GM10248 (cell line): ENCODE measurements at regions of chr7 and their contacts with region 1.

Region 1: DNA sequence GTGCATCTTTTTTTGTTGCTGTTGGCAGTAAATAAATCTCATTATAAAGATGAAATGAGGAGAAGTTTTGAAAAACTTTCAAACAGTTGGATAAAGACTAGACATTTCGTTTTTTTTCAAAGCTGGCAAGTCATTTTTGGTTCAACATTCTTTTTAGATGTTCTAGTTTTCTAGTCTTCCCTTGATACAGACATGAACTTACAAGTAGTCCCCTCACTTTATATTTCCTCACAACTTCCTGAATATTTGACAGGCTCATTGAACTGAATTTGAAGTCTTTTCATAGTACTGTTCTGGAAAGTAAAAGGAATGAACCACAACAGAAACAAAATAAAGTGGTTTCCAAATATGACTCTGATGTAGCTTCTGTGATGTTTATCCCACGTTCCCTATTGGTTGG is 134.2 kb downstream of the NRCAM start:
- DNase-seq: no peak
- CTCF ChIP-seq: no peak

Region 2: DNA sequence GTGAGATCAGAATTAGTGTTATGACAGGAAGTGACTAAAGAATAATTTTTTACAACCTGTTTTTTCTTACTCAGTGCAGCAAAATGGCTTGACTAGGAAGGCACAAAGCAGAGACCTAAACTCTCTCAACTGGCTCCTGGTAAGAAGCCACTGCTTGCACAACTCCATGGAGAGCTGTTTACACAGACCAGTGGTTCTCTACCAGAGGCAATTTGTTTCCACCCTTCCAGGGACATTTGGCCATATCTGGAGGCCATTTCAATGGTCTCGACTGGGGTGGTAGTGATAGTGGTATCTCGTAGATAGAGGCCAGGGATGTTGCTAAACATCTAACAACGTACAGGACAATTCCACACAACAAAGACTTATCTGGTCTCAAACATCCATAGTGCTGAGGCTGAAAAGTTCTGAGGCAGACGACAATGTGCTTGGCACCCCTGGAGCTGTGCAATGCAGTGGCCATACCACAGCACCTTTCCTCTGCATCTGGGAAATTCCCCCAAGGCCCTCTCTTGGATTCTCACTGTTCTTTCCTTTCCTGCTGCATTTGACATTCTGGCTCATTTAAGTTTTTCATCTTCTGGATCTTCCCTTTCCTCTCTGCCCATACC is 86.5 kb before region 1 on chr7:
- CTCF ChIA-PET with region 1: no interaction called
- POLR2A ChIA-PET with region 1: no interaction called
- DNase-seq: no peak
- CTCF ChIP-seq: no peak

Region 3: GRCh38 chr7:108294595-108294994 is 27.5 kb before region 1 on chr7:
- CTCF ChIA-PET with region 1: no interaction called
- POLR2A ChIA-PET with region 1: no interaction called
- DNase-seq: peak; percentile 23
- CTCF ChIP-seq: no peak

Region 4: GRCh38 chr7:108308903-108309302 is 13.1 kb before region 1 on chr7:
- CTCF ChIA-PET with region 1: interaction called, 14 read pairs
- POLR2A ChIA-PET with region 1: no interaction called
- DNase-seq: no peak
- CTCF ChIP-seq: no peak